ENCODE measurements at regions of chr7 and their contacts with region 1.

Region 1: DNA sequence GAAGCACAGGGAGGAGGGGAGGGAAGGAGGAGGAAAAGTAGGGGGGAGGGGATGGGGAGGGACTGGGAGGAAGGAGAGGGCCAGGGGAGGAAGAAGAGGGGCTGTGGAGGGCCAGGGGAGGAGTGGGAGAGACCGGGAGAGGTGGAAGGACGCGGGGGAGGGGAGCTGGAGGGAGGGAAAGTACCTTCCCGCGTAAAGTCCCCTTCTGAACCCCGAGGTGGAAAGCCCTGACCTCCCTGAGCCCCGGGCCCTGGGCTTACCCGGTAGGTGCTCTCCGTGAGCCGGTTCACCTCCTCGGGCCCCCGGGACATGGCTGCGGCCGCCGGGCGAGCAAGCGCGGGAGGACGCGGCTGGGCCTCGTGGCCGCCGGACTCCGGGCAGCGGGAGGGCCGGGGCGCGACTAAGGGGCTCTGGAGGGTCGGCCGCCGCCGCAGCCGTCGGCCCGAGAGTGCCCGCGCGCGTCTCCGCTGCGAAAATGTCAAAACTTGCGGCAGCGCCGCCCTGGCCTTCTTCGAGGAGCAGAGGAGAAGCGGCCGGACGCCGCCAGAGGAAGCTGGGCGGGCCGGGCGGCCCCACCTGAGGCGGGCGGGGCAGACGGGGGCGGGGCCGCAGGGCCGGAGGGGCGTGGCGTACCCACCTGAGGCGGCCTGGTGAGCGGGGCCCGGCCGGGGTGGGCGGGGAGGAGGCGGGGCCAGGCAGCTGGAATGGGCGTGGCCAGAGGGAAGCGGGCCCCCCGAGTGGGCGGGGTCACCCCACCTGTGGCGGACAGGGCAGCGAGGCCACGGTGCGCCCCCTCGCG is at the start of gene BAIAP2L1:
- DNase-seq: peak; percentile 68
- H3K4me3 Mint-ChIP-seq: peak within 1 kb of the TSS; percentile 49
- H3K27ac Mint-ChIP-seq: no peak within 1 kb of the TSS
- H3K4me1 Mint-ChIP-seq: peaks cover 2% of the 10 kb centered on the region
- H3K27me3 Mint-ChIP-seq: peaks cover 15% of the 10 kb centered on the region
- total RNA-seq, gene BAIAP2L1: 1.9 TPM in 2 replicates

Region 2: DNA sequence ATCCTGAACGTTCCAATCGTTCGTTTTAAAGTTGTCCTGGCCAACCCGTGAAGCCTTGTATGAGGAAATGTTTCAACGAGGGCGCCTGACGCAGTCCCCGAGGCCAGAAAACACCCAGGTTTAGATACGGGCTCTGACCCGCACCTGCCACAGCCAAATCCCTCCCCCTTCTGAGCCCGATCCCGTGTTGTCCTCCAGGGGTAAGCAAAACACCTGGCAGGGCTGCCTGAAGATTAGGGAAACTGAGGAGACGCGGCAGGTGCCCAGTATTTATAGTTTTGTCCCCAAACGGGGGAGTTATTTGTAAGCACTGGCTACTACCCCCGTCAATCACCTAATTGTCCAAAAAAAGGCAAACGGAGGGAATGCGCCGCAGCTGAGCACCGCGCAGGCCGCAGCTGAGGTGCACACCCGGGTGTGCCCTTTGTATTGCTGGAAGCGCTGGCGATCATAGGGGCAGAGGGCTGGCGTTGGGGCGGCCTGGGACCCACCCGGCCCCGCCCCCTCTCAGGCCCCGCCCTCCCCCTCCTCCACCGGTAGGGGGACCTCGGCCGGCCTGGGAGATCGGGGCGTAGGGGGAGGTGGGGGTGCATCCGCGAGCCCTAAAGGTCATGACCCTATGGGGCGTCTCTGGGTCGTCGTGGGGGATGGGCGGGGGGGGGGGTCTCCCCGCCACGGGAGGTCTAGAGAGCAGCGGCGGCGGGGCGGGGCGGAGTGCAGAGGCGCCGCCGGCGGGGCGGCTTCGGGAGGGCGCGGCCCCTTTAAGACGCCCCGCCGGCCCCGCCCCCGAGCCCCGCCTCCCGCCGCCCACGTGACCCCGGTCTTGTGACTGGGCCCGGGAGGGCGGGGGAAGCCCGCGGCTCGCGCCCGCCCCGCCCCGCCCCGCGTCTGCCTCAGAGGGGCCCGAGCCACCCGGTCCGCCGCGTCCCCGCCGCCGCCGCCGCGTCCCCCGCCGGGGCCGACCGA is 119.7 kb before region 1 on chr7 and contains the start of gene BRI3:
- intact Hi-C with region 1: loop called (anchors 5 kb)
- DNase-seq: peak; percentile 76
- H3K4me3 Mint-ChIP-seq: peak within 1 kb of the TSS; percentile 86
- H3K27ac Mint-ChIP-seq: peak within 1 kb of the TSS; percentile 80
- H3K4me1 Mint-ChIP-seq: peaks cover 13% of the 10 kb centered on the region
- H3K27me3 Mint-ChIP-seq: no peaks in the 10 kb centered on the region
- total RNA-seq, gene BRI3: 63.6 and 67.6 TPM in 2 replicates